Gastrocnemius medialis (tissue), 4 donors: ENCODE measurements at regions of chr5 and their contacts with region 1.

Region 1: DNA sequence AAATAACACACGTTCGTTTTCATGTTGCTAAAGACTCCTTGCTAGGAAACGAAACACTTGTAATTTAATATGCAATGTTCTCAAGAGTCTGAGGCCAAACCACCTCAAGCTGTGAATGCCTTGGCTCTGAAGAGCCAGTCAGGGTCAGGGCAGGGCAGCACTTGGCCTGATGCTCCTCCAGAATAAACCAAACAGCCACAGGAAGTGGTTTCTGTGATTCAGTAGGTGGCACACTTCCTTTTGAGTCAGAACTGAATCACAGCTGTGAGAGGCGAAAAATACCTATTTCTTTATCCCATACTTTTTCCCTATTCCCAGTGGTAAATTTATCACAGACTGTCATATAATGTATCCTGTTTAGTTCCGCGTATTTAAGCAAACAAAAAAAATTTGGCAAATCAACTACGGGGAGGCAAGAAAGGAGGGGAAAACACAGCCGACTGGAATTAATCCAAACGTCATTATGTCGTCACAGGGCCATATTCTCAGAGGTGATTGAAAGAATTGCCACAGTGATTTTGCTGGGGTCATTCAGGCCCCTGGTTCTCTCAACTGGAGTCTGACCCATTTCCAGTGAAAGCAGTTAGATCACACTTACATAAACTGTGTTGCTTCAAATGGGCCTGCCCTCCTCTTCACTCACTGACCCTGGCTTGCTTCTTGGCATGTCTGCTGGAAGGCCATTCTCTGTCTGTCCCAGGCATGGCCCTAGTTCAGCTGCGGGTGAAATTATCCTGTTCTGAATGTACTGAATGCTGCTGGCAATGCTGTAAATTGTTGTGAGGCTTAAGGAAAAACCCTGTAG is 71.2 kb downstream of the ARRDC3 start:
- DNase-seq: peak; percentile 88 to 96
- ATAC-seq: peak; percentile 57 to 61
- H3K4me3 ChIP-seq: peak overlapping the region; percentile 26 to 42 (median 29)
- H3K27ac ChIP-seq: peak overlapping the region; percentile 85 to 94 (median 90)
- H3K4me1 ChIP-seq: peaks cover 27 to 52% of the 10 kb centered on the region in 2 donors
- H3K27me3 ChIP-seq: no peaks in the 10 kb centered on the region
- CTCF ChIP-seq: peak in 2 of 5 experiments; percentile 10 to 17
- POLR2A ChIP-seq: peak in 1 of 2 donors; percentile 43

Region 2: DNA sequence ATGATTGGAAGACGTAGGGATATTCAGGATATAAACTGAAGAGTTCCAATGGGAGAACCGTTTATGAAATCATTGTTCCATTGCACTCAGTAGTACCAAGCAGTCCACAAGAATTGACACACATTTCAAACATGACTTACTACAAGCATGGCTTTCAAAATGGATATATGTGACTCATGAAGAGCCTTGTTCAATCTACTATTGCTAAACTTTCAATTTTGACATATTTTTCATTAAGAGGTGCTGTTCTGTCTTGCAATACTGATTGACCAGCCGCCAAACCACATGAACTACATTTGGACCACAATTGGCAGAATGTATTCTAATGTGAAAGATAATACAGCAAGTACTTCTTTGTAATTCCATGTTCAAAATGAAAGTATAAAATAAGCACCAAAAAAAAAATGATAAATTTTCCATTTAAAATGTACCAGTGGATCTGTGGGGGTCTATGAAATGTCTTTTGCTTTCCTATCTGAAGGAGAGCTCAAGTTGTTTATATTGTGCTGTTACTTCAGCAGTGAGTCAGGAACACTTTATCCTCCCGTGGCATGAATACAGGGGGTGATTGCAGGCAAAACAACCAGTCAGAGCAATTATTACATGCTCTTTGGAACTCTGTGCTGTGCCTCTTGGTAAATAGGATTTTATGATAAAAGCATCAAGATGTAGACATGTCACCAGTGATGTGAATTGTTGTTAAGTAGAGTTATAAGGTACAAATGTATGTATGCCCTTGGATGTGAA is 294.8 kb before region 1 on chr5:
- in situ Hi-C with region 1: no loop called
- intact Hi-C with region 1: loop called (anchors 1 kb)
- DNase-seq: peak; percentile 62 to 63
- ATAC-seq: peak; percentile 89 to 94
- H3K4me3 ChIP-seq: peak overlapping the region in 3 of 4 donors; percentile 24 to 32 (median 27)
- H3K27ac ChIP-seq: peak overlapping the region; percentile 70 to 81 (median 76)
- H3K4me1 ChIP-seq: peaks cover 41 to 45% of the 10 kb centered on the region in 2 donors
- H3K27me3 ChIP-seq: no peaks in the 10 kb centered on the region
- CTCF ChIP-seq: no peak
- POLR2A ChIP-seq: no peak

Region 3: DNA sequence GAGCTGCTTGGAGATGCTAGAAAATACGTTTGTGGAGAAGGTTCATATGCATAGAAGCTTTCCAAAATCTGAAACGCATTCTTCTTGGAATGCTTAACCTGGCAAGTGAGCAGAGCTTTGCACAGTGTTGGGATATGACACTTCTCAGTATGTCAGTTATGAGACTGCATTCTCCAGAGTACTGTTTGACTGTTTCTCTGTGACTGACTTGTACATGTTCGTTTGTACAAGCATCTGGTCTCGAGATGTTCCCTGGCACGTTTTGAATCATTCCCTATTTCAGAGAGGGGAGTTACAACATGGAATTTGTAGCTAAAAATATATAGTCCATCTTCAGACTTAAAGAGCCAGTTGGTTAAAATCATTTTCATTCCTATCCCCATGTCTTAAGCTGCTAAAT is 201.2 kb before region 1 on chr5:
- in situ Hi-C with region 1: no loop called
- intact Hi-C with region 1: loop called (anchors 2 kb)
- DNase-seq: peak in 1 of 2 donors; percentile 35
- ATAC-seq: peak; percentile 93 to 97
- H3K4me3 ChIP-seq: no peak overlapping the region
- H3K27ac ChIP-seq: peak overlapping the region; percentile 9 to 58 (median 24)
- H3K4me1 ChIP-seq: peaks cover 19 to 20% of the 10 kb centered on the region in 2 donors
- H3K27me3 ChIP-seq: no peaks in the 10 kb centered on the region
- CTCF ChIP-seq: no peak
- POLR2A ChIP-seq: no peak

Region 4: GRCh38 chr5:91219803-91220371 is 92.0 kb before region 1 on chr5:
- in situ Hi-C with region 1: no loop called
- intact Hi-C with region 1: loop called (anchors 5 kb)
- DNase-seq: no peak
- ATAC-seq: no peak
- H3K4me3 ChIP-seq: no peak overlapping the region
- H3K27ac ChIP-seq: no peak overlapping the region
- H3K4me1 ChIP-seq: no peaks in the 10 kb centered on the region
- H3K27me3 ChIP-seq: no peaks in the 10 kb centered on the region
- CTCF ChIP-seq: peak in 2 of 5 experiments; percentile 24 to 43
- POLR2A ChIP-seq: no peak

Region 5: GRCh38 chr5:91280362-91281269 is 31.3 kb before region 1 on chr5:
- in situ Hi-C with region 1: no loop called
- intact Hi-C with region 1: loop called (anchors 2 kb)
- DNase-seq: peak; percentile 91 to 93
- ATAC-seq: peak; percentile 96 to 97
- H3K4me3 ChIP-seq: peak overlapping the region; percentile 61 to 75 (median 72)
- H3K27ac ChIP-seq: peak overlapping the region; percentile 89 to 98 (median 94)
- H3K4me1 ChIP-seq: peaks cover 10% of the 10 kb centered on the region in 2 donors
- H3K27me3 ChIP-seq: no peaks in the 10 kb centered on the region
- CTCF ChIP-seq: peak in 1 of 5 experiments; percentile 14
- POLR2A ChIP-seq: peak; percentile 74 to 79

Region 6: GRCh38 chr5:91293131-91293530 is 18.8 kb before region 1 on chr5:
- in situ Hi-C with region 1: no loop called
- intact Hi-C with region 1: loop called (anchors 1 kb)
- DNase-seq: no peak
- ATAC-seq: no peak
- H3K4me3 ChIP-seq: no peak overlapping the region
- H3K27ac ChIP-seq: no peak overlapping the region
- H3K4me1 ChIP-seq: peaks cover 11 to 16% of the 10 kb centered on the region in 2 donors
- H3K27me3 ChIP-seq: no peaks in the 10 kb centered on the region
- CTCF ChIP-seq: no peak
- POLR2A ChIP-seq: no peak

Region 7: DNA sequence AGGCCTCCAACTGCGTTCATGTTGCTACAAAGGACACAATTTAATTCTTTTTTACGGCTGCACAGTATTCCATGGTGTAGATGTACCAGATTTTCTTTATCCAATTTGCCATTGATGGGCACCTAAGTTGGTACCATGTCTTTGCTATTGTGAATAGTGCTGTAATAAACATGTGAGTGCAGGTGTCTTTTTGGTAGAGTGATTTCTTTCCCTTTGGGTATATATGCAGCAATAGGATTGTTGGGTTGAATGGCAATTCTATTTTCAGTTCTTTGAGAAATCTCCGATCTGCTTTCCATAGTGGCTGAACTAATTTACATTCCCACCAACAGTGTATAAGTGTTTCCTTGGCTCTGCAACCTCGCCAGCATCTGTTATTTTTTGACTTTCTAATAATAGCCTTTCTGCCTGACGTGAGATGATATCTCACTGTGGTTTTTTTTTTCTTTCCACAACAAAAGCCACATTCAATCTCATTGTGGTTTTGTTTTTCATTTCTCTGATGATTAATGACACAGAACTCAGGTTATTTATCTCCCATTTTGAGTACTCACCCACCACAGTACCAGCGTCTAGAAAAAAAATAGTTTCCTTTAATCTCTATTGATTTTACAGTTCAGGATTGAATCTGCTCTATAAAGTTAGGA is 49.3 kb after region 1 on chr5:
- in situ Hi-C with region 1: loop called in 1 of 4 experiments (anchors 10 kb)
- intact Hi-C with region 1: loop called (anchors 2 kb)
- DNase-seq: no peak
- ATAC-seq: no peak
- H3K4me3 ChIP-seq: no peak overlapping the region
- H3K27ac ChIP-seq: peak overlapping the region; percentile 31 to 65 (median 48)
- H3K4me1 ChIP-seq: peaks cover 10 to 21% of the 10 kb centered on the region in 2 donors
- H3K27me3 ChIP-seq: no peaks in the 10 kb centered on the region
- CTCF ChIP-seq: no peak
- POLR2A ChIP-seq: no peak